ENCODE measurements at regions of chr20 and their contacts with region 1.

Region 1: DNA sequence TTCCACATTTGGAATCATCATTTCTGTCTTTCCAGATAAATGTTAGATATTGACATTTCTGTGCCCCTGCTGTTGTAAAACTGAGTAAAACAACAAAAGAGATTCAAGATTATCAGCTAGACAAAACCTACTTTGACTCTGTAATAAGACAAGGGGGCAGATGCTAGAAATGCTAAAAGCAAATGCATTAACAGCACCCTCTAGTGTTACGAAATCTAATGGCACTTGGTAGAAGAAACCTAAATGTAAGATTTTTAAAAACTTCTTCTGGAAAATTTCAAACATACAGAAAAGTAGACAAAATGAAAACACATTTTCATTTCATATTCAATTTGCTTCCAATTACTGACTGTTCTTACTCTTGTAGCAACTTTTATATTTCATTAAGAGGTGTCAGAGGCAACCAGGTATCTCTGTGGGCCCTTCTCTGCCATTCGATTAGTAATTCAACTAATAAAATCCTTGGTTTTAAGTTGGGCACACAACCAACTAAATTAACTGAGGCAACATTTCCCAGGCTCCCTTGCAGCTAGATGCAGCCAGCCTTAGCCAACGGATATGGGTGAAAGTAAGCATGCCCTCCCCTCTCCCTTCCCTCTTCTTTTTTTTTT is 45.0 kb downstream of the SLC23A2 start:
- DNase-seq: peak in 4 of 5 donors; percentile 47 to 63 (median 56)
- H3K4me3 ChIP-seq: no peak overlapping the region
- H3K4me3 Mint-ChIP-seq: no peak overlapping the region
- H3K27ac ChIP-seq: no peak overlapping the region
- H3K27ac Mint-ChIP-seq: peak overlapping the region in 1 of 7 donors; percentile 19
- H3K4me1 ChIP-seq: peaks cover 3% of the 10 kb centered on the region
- H3K4me1 Mint-ChIP-seq: peaks cover 2 to 11% (median 4%) of the 10 kb centered on the region in 4 donors
- H3K27me3 ChIP-seq: no peaks in the 10 kb centered on the region
- H3K27me3 Mint-ChIP-seq: no peaks in the 10 kb centered on the region

Region 2: DNA sequence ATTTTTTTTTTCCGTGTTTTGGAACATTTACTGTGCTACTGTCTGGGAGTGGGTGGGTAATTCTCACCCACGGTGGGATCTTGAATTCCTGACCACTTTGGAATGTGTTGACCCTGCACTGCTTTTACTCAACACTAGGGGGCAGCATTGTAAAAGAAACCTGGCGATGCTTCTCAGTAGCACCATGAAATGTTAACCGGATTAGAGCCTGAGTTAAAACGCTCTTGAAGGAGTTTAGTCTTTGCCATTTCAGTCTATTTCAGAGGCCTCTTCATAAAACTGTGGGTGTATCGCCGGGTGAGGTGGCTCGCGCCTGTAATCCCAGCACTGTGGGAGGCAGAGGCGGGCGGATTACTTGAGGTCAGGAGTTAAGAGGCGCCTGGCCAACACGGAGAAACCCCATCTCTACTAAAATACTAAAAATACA is 349.0 kb before region 1 on chr20:
- CTCF ChIA-PET with region 1: interaction called, 4 read pairs
- POLR2A ChIA-PET with region 1: no interaction called
- intact Hi-C with region 1: loop called (anchors 2 kb)
- DNase-seq: peak; percentile 65 to 69 (median 66)
- H3K4me3 ChIP-seq: no peak overlapping the region
- H3K4me3 Mint-ChIP-seq: no peak overlapping the region
- H3K27ac ChIP-seq: no peak overlapping the region
- H3K27ac Mint-ChIP-seq: peak overlapping the region in 2 of 7 donors; percentile 67 to 77
- H3K4me1 ChIP-seq: no peaks in the 10 kb centered on the region
- H3K4me1 Mint-ChIP-seq: peaks cover 0 to 5% (median 2%) of the 10 kb centered on the region in 4 donors
- H3K27me3 ChIP-seq: peaks cover 5% of the 10 kb centered on the region
- H3K27me3 Mint-ChIP-seq: peaks cover 11 to 16% of the 10 kb centered on the region in 2 donors

Region 3: DNA sequence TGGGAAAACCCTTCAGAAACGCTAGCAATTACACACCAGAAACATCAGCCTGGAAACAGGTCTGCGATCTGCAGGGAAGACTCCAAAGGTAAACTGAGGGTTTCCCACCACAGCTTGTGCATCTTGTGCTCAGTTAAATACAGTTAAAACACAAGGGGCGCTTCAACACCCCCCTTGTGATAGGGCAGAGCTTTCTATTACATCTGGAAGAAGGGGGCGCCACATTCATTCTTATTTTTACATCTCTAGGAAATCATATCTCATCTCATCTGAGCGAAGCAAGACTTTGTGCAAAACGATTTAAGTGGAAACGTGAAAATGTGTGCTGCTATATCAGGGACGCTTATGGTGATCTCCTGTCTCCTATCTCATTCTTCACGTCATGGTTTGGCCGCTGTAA is 176.1 kb before region 1 on chr20:
- CTCF ChIA-PET with region 1: interaction called, 17 read pairs
- POLR2A ChIA-PET with region 1: no interaction called
- intact Hi-C with region 1: loop called (anchors 1 kb)
- DNase-seq: peak in 3 of 5 donors; percentile 16 to 25 (median 23)
- H3K4me3 ChIP-seq: no peak overlapping the region
- H3K4me3 Mint-ChIP-seq: no peak overlapping the region
- H3K27ac ChIP-seq: no peak overlapping the region
- H3K27ac Mint-ChIP-seq: peak overlapping the region in 6 of 7 donors; percentile 9 to 85 (median 56)
- H3K4me1 ChIP-seq: no peaks in the 10 kb centered on the region
- H3K4me1 Mint-ChIP-seq: peaks cover 5 to 11% (median 8%) of the 10 kb centered on the region in 4 donors
- H3K27me3 ChIP-seq: no peaks in the 10 kb centered on the region
- H3K27me3 Mint-ChIP-seq: no peaks in the 10 kb centered on the region

Region 4: DNA sequence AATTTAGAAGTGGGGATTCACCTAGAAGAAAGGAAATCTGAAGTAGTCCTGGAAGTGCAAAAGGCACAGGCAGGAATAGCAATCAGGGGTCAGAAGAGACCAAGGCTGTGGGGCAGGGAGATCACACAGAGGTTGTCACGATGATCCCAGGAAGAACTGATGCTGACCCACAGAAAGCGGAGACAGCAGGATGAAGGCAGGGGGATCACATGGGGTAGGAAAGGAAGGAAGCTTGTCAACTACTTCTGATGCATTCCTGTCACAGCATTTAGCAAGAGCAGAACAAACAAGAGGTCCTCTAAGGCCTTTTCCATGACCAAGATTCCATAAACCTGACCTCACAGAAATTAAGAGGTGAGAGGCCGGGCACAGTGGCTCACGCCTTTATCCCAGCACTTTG is 34.1 kb before region 1 on chr20:
- CTCF ChIA-PET with region 1: no interaction called
- POLR2A ChIA-PET with region 1: no interaction called
- intact Hi-C with region 1: no loop called
- DNase-seq: no peak
- H3K4me3 ChIP-seq: no peak overlapping the region
- H3K4me3 Mint-ChIP-seq: no peak overlapping the region
- H3K27ac ChIP-seq: no peak overlapping the region
- H3K27ac Mint-ChIP-seq: peak overlapping the region in 1 of 7 donors; percentile 33
- H3K4me1 ChIP-seq: no peaks in the 10 kb centered on the region
- H3K4me1 Mint-ChIP-seq: peaks cover 8 to 10% (median 8%) of the 10 kb centered on the region in 4 donors
- H3K27me3 ChIP-seq: no peaks in the 10 kb centered on the region
- H3K27me3 Mint-ChIP-seq: no peaks in the 10 kb centered on the region

Region 5: GRCh38 chr20:4966826-4967751 is 10.8 kb after region 1 on chr20:
- CTCF ChIA-PET with region 1: interaction called, 11 read pairs
- POLR2A ChIA-PET with region 1: no interaction called
- intact Hi-C with region 1: no loop called
- DNase-seq: no peak
- H3K4me3 ChIP-seq: no peak overlapping the region
- H3K4me3 Mint-ChIP-seq: no peak overlapping the region
- H3K27ac ChIP-seq: no peak overlapping the region
- H3K27ac Mint-ChIP-seq: peak overlapping the region in 4 of 7 donors; percentile 1 to 80 (median 55)
- H3K4me1 ChIP-seq: peaks cover 9% of the 10 kb centered on the region
- H3K4me1 Mint-ChIP-seq: peaks cover 4 to 11% (median 7%) of the 10 kb centered on the region in 4 donors
- H3K27me3 ChIP-seq: no peaks in the 10 kb centered on the region
- H3K27me3 Mint-ChIP-seq: no peaks in the 10 kb centered on the region